PC-9 (cell line): ENCODE measurements at regions of chr19 and their contacts with region 1.

Region 1: DNA sequence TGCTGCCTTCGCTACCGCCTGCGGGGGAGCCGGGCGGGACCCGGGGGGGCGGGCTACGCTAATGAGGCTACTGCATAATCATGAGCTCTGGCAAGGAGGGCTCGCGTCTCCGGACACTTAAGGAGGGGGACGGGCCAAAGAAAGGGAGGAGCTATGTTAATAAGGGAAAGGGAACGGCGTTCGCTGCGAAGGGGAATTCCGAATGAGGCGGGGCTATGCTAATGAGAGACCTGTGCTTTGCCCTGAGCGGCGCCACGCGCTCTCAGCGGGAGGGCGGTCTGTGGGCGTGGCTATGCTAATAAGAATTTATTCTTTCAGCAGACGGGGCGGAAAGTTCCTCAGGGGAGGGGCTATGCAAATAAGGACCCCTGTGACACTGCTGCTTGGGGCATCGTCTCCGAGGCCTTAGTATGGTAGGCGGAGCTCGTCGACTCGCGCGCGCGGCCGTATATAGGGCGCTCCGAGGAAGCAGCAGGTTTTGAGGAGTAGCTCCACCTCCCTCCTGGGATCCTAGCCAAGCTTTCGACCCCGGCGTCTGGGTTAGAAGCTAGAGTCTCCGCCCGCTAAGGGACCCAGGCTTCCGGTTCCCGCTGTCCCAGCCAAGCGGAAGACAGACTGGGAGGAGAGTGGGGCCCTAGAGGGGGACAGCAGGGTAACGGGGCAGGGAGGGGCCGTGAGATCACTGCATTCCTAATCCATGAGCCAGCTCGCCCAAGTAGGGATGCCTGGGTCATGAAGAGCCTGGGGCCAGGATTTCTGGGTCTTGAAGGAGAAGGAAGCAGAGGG is at the start of gene RRAS:
- DNase-seq: peak; percentile 99
- H3K4me3 ChIP-seq: peak within 1 kb of the TSS; percentile 80
- H3K27ac ChIP-seq: peak within 1 kb of the TSS; percentile 100
- H3K4me1 ChIP-seq: peaks cover 37% of the 10 kb centered on the region
- H3K27me3 ChIP-seq: no peaks in the 10 kb centered on the region
- CTCF ChIP-seq: no peak
- total RNA-seq, gene RRAS: 36.6 and 40.6 TPM in 2 replicates

Region 2: DNA sequence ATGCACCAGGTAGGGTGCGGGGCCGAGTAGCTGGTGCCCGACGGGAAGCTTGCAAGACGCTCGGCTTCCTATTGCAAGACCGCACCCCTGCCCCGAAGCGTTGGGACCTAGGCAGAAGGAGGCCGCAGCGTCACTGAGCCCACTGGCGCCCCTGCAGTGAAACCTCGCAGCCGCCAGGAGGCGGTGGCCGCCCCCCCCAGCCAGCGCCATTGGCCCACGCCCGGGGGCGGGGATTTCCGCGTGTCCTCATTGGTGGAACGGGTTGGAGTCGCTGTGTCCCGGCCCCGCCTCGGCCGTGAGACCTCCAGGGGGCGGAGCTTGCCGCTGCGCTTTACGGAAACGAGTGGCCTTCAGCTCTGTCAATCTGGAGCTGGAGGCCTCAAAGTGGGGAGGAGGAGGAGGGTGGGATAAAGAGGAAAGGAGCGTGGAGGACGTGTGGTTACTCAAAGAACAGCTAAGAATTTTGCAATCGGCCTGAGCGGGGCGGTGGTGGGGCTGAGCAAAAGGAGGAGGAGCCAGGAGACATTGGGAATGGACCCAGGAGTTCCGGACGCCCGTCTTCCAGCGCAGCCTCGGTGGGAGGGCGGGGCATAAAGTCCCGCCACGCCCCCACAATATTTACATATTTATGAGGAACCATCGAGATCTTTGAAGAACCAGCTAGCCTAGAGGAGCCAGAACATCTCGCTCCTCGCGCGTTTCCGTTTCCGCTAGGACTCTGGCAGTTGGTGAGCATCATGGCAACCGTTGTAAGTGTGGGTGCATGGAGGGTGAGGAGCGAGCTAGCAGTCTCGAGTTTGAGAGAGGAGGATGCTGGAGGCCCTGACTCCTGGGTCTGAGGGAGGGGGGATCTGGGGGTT is 646.9 kb before region 1 on chr19 and contains the starts of genes GYS1 and RUVBL2:
- CTCF ChIA-PET with region 1: no interaction called
- POLR2A ChIA-PET with region 1: interaction called, 6 read pairs
- intact Hi-C with region 1: loop called (anchors 10 kb)
- DNase-seq: peak; percentile 99
- H3K4me3 ChIP-seq: peak within 1 kb of the TSS; percentile 97
- H3K27ac ChIP-seq: peak within 1 kb of the TSS; percentile 41; the same call in 1 of the 2 replicates
- H3K4me1 ChIP-seq: peaks cover 16% of the 10 kb centered on the region
- H3K27me3 ChIP-seq: no peaks in the 10 kb centered on the region
- CTCF ChIP-seq: peak; percentile 91
- total RNA-seq, gene GYS1: 47.5 and 54.2 TPM in 2 replicates
- total RNA-seq, gene RUVBL2: 175 and 179 TPM in 2 replicates

Region 3: GRCh38 chr19:49580264-49581006 is 59.9 kb before region 1 on chr19 and contains the start of gene NOSIP:
- CTCF ChIA-PET with region 1: interaction called, 6 read pairs
- POLR2A ChIA-PET with region 1: interaction called, 10 read pairs
- intact Hi-C with region 1: loop called (anchors 2 kb)
- DNase-seq: peak; percentile 92 to 94
- H3K4me3 ChIP-seq: peak within 1 kb of the TSS; percentile 83
- H3K27ac ChIP-seq: peak within 1 kb of the TSS; percentile 52
- H3K4me1 ChIP-seq: peaks cover 8% of the 10 kb centered on the region
- H3K27me3 ChIP-seq: no peaks in the 10 kb centered on the region
- CTCF ChIP-seq: no peak
- total RNA-seq, gene NOSIP: 63.6 and 71.3 TPM in 2 replicates

Region 4: DNA sequence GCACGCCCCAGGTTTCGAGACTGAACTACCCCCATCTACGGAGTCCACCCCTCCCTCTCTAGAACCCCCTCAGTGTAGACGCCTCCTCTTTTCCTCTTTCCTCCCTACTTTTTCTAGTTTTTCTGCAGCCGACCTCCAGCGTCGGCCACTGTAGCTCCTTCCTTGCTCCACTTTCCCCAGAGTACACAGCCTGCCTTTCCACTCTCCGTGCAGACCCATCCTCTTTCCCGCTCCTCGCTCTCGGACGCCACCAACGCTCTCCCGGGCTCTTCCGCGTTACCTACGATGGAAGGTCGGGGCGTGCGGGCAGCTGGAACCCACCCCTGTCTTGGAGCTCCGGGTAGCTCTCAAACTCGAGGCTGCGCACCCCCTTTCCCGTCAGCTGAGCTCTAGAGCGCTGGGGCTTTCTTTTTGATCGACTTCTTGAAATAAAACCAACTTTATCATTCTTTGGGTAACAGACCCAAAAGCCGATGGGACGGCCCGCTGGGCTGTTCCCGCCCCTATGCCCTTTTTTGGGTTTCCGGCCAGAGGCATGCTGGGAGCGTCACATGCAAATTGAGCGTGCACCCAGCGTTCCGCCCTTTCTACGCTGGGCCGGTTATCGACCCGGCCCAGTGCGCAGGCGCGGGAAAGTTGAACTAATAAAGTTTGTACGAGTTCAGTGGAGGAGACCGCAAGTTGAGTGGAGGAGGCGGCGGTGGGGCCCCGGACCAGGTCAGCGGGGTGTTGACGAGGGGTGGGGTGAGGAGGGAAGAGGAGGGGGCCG is 25.2 kb after region 1 on chr19 and contains the starts of genes BCL2L12 and IRF3:
- CTCF ChIA-PET with region 1: interaction called, 13 read pairs
- POLR2A ChIA-PET with region 1: interaction called, 25 read pairs
- intact Hi-C with region 1: loop called (anchors 1 kb)
- DNase-seq: peak; percentile 92 to 95
- H3K4me3 ChIP-seq: peak within 1 kb of the TSS; percentile 95
- H3K27ac ChIP-seq: peak within 1 kb of the TSS; percentile 67
- H3K4me1 ChIP-seq: peaks cover 21% of the 10 kb centered on the region
- H3K27me3 ChIP-seq: no peaks in the 10 kb centered on the region
- CTCF ChIP-seq: no peak
- total RNA-seq, gene BCL2L12: 80.3 and 84.8 TPM in 2 replicates
- total RNA-seq, gene IRF3: 181 and 220 TPM in 2 replicates

Region 5: DNA sequence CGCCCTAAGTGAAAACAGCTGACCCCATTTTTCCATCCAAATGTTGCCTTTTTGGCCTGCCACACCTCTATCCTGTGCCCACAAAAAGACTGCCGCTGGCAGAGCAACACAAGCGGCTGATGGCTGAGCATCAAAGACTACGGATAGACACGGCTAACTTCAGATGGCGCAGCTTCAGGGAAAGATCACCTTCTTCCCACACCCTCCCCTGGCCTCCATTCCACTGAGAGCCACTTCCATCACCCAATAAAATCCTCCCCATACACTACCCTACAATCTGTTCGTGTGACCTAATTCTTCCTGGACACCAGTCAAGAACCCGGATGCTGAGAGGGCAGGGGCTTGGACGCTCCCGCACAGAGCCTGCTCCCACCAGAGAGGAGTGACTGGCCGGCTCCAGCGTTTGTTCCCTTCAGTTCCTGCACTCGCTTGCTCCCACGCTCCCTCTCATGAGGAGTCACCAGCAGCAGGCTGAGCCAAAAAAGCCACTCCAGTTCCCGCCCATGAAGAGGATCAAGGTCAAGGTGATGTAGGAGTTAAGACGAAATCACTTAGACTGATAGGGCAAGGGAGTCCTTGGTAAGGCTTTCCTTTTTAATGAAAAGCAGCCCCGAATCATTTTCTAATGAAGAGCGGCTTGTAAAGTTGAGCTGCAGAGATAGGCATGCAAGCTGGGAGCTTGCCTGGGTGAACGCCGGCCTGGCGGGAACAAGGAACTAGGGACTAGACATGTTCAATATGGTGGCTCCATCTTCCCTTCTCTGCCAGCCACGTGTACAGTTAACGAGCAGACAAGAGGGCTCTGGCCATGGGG is 87.1 kb after region 1 on chr19:
- CTCF ChIA-PET with region 1: no interaction called
- POLR2A ChIA-PET with region 1: interaction called, 14 read pairs
- intact Hi-C with region 1: no loop called
- DNase-seq: no peak
- H3K4me3 ChIP-seq: no peak overlapping the region
- H3K27ac ChIP-seq: no peak overlapping the region
- H3K4me1 ChIP-seq: peaks cover 11% of the 10 kb centered on the region
- H3K27me3 ChIP-seq: no peaks in the 10 kb centered on the region
- CTCF ChIP-seq: no peak

Region 6: GRCh38 chr19:49843265-49843664 is 203.0 kb after region 1 on chr19:
- CTCF ChIA-PET with region 1: no interaction called
- POLR2A ChIA-PET with region 1: no interaction called
- intact Hi-C with region 1: no loop called
- DNase-seq: no peak
- H3K4me3 ChIP-seq: no peak overlapping the region
- H3K27ac ChIP-seq: no peak overlapping the region
- H3K4me1 ChIP-seq: peaks cover 5% of the 10 kb centered on the region
- H3K27me3 ChIP-seq: no peaks in the 10 kb centered on the region
- CTCF ChIP-seq: no peak

Region 7: DNA sequence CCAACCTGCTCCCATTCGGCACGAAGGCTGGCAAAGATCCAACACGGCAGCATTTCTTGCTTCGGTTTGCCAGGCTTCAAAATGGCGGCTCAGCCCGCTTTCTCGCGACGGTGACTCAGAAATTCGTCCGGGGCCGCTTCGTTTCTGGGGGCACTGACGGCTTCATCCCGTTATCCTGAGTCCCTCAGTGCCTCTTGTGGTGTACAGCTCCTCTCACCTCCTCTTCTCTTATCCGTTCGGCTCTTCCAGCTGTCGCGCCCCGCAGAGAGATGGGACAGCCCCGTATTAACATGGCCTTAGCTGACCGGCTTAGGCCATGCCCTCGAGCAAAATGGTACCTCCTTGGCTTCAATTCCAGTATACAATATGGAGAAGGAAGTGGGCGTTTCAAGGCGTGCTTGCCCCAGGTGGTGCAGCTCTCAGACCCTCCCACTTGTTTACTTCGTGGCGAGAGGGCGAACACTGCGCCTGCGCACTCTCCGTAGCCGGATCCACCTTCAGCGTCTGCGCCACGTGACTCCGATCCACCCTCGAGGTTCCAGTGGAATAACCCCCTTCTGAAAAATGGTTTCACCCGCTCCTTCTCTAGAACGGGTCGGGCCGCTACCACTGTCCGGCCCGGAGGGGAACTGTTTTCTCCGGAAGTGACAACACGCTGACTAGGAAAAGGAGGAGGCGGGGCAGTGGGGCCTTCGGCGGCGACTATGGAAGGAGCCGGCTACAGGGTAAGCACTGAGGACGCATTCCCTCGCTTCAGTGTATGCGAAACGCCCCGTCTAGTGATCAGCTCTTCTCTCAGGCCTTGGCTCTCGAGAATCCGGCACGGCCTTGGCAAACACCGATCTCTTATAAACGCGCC is 236.9 kb after region 1 on chr19 and contains the starts of genes AKT1S1 and TBC1D17:
- CTCF ChIA-PET with region 1: no interaction called
- POLR2A ChIA-PET with region 1: interaction called, 7 read pairs
- intact Hi-C with region 1: loop called (anchors 2 kb)
- DNase-seq: peak; percentile 99
- H3K4me3 ChIP-seq: peak within 1 kb of the TSS; percentile 79
- H3K27ac ChIP-seq: peak within 1 kb of the TSS; percentile 92
- H3K4me1 ChIP-seq: peaks cover 21% of the 10 kb centered on the region
- H3K27me3 ChIP-seq: no peaks in the 10 kb centered on the region
- CTCF ChIP-seq: no peak
- total RNA-seq, gene AKT1S1: 109 and 143 TPM in 2 replicates
- total RNA-seq, gene TBC1D17: 52.1 and 62.3 TPM in 2 replicates